Calu3 (cell line): ENCODE measurements at regions of chr13 and their contacts with region 1.

Region 1: DNA sequence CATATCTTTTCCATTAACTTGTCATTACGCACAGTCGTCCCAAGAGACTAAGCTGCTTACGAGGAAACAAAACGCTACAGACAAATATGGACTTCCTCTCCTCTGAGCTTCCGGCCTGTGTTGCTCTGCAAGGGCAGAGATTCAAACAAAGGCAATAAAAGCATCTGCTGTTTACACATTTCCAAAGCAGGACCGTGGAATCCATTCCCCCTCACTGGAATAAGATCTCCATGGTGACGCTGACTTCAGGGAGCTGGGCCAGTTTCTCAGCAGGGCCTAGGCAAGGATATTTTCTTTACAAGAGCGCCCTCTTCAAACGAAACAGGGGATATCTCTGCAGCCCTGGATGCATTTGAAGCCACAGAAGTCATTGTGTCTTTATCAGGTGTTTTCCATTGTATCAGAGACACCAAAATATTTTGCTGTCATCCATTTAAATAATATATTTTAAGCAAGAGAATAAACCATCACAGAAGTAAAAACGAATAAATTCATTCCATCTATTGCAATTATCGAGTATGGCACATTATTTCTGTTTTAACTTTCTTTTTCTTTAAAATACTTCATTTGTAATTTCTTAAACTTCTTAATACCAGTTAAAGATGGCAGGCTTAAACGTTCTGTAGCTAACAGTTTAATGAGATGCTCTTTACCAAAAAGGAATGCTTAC is 177.5 kb downstream of the DCLK1 start:
- DNase-seq: peak; percentile 17
- H3K4me3 Mint-ChIP-seq: no peak overlapping the region
- H3K27ac Mint-ChIP-seq: no peak overlapping the region
- H3K4me1 Mint-ChIP-seq: no peaks in the 10 kb centered on the region
- H3K27me3 Mint-ChIP-seq: peaks cover 29% of the 10 kb centered on the region
- CTCF ChIP-seq: peak; percentile 34

Region 2: GRCh38 chr13:35818633-35819067 is 135.0 kb before region 1 on chr13:
- CTCF ChIA-PET with region 1: no interaction called
- intact Hi-C with region 1: loop called (anchors 10 kb)
- DNase-seq: no peak
- H3K4me3 Mint-ChIP-seq: no peak overlapping the region
- H3K27ac Mint-ChIP-seq: no peak overlapping the region
- H3K4me1 Mint-ChIP-seq: no peaks in the 10 kb centered on the region
- H3K27me3 Mint-ChIP-seq: no peaks in the 10 kb centered on the region
- CTCF ChIP-seq: no peak

Region 3: DNA sequence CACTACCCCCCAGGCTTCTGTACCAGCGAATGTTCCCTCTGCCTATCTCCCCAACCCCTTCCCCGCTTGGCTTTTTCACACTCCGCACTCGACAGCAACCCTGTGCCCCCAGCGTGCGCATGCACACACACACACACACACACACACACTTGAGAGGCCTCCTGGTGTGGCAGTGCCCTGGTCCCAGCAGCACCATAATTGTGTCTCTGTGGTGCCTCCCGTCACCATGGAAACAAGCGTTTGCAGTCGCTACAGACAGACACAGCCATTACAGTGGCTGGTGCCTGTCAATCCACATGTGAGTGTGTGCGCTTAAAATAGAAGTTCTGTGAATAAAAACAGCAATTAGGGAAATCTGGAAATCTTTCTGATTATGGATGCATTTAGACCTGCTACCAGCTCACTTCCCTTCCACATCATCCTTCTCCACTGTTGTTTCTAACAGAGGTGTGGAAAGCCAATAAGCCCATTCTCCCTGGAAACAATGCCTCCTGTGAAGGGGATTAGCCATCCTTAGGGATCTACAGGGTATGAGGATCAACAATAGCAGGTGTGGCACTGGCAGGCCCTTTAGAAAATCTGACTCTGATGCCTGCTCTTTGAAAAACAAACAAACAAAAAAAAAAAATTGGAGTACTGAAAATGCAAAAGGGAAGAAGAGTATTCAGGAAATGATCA is 31.2 kb after region 1 on chr13:
- CTCF ChIA-PET with region 1: no interaction called
- intact Hi-C with region 1: no loop called
- DNase-seq: no peak
- H3K4me3 Mint-ChIP-seq: no peak overlapping the region
- H3K27ac Mint-ChIP-seq: no peak overlapping the region
- H3K4me1 Mint-ChIP-seq: no peaks in the 10 kb centered on the region
- H3K27me3 Mint-ChIP-seq: peaks cover 23% of the 10 kb centered on the region
- CTCF ChIP-seq: no peak